ENCODE measurements at regions of chr2 and their contacts with region 1.

Region 1: GRCh38 chr2:203782262-203782976 is 76.0 kb downstream of the CD28 start:
- DNase-seq: peak; percentile 67 to 79 (median 69)
- H3K4me3 ChIP-seq: no peak overlapping the region
- H3K4me3 Mint-ChIP-seq: peak overlapping the region in 3 of 8 donors; percentile 24 to 66 (median 30)
- H3K27ac ChIP-seq: no peak overlapping the region
- H3K27ac Mint-ChIP-seq: peak overlapping the region in 6 of 7 donors; percentile 44 to 85 (median 70)
- H3K4me1 ChIP-seq: peaks cover 20% of the 10 kb centered on the region
- H3K4me1 Mint-ChIP-seq: peaks cover 31 to 55% (median 40%) of the 10 kb centered on the region in 4 donors
- H3K27me3 ChIP-seq: no peaks in the 10 kb centered on the region
- H3K27me3 Mint-ChIP-seq: no peaks in the 10 kb centered on the region

Region 2: DNA sequence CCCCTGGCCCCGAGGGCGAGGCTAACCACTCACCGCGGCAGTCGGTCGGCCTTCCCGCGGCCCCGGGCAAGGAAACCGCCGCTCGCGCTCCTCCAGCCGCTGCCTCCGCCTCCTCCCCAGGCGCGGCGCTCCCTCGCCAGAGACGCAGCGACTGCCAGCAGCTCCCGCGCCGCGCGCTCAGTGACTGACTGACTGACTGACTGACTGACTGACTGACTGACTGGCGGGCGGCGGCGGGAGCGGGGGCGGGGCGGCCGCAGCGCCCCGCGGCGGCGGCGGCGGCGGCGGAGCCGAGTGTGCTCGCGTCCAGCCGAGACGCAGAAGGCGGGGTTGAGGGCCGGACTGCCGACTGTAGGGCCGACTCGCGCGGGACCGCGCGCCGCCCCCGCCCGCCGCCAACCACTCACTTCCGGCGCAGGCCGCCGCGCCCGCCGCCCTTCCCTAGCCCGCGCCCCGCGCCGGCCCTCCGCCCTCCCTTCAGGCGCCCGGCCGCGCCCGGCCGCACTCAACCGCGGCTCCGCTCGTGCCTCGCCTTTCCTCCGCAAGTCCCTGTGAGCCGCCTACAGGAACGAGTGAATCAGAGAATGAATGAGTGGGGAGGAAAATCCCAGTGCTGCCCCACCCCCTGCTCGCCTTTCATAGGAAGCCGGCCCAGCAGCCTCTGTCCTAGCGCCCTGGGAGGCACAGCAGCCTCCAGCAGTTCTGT is 247.2 kb before region 1 on chr2 and contains the start of gene RAPH1:
- CTCF ChIA-PET with region 1: interaction called, 5 read pairs
- POLR2A ChIA-PET with region 1: no interaction called
- intact Hi-C with region 1: loop called (anchors 2 kb)
- DNase-seq: peak; percentile 39 to 67 (median 56)
- H3K4me3 ChIP-seq: peak within 1 kb of the TSS; percentile 20 to 58
- H3K4me3 Mint-ChIP-seq: peak within 1 kb of the TSS; percentile 86 to 95 (median 91)
- H3K27ac ChIP-seq: no peak within 1 kb of the TSS
- H3K27ac Mint-ChIP-seq: peak within 1 kb of the TSS; percentile 72 to 89 (median 79)
- H3K4me1 ChIP-seq: peaks cover 16% of the 10 kb centered on the region
- H3K4me1 Mint-ChIP-seq: peaks cover 14 to 29% (median 21%) of the 10 kb centered on the region in 4 donors
- H3K27me3 ChIP-seq: no peaks in the 10 kb centered on the region
- H3K27me3 Mint-ChIP-seq: peaks cover 8% of the 10 kb centered on the region in 2 donors
- total RNA-seq, gene RAPH1: 2.1 to 2.6 TPM

Region 3: GRCh38 chr2:203861197-203861596 is 78.8 kb after region 1 on chr2:
- CTCF ChIA-PET with region 1: no interaction called
- POLR2A ChIA-PET with region 1: no interaction called
- intact Hi-C with region 1: no loop called
- DNase-seq: no peak
- H3K4me3 ChIP-seq: no peak overlapping the region
- H3K4me3 Mint-ChIP-seq: peak overlapping the region in 7 of 8 donors; percentile 10 to 66 (median 55)
- H3K27ac ChIP-seq: no peak overlapping the region
- H3K27ac Mint-ChIP-seq: peak overlapping the region in 5 of 7 donors; percentile 10 to 80 (median 68)
- H3K4me1 ChIP-seq: peaks cover 57% of the 10 kb centered on the region
- H3K4me1 Mint-ChIP-seq: peaks cover 38 to 60% (median 47%) of the 10 kb centered on the region in 4 donors
- H3K27me3 ChIP-seq: no peaks in the 10 kb centered on the region
- H3K27me3 Mint-ChIP-seq: no peaks in the 10 kb centered on the region

Region 4: GRCh38 chr2:204335451-204336058 is 553.1 kb after region 1 on chr2:
- CTCF ChIA-PET with region 1: no interaction called
- POLR2A ChIA-PET with region 1: no interaction called
- intact Hi-C with region 1: no loop called
- DNase-seq: no peak
- H3K4me3 ChIP-seq: no peak overlapping the region
- H3K4me3 Mint-ChIP-seq: no peak overlapping the region
- H3K27ac ChIP-seq: no peak overlapping the region
- H3K27ac Mint-ChIP-seq: no peak overlapping the region
- H3K4me1 ChIP-seq: no peaks in the 10 kb centered on the region
- H3K4me1 Mint-ChIP-seq: peaks cover 0 to 4% (median under 1%) of the 10 kb centered on the region in 4 donors
- H3K27me3 ChIP-seq: no peaks in the 10 kb centered on the region
- H3K27me3 Mint-ChIP-seq: peaks cover 33 to 36% of the 10 kb centered on the region in 2 donors

Measured in CD4-positive, alpha-beta memory T cell (primary cell).